OCI-LY7 (cell line): ENCODE measurements at regions of chr12 and their contacts with region 1.

Region 1: GRCh38 chr12:31238764-31239387 is 87.1 kb downstream of the SINHCAF start:
- DNase-seq: peak; percentile 73
- H3K4me3 ChIP-seq: no peak overlapping the region
- H3K27ac ChIP-seq: no peak overlapping the region
- H3K4me1 ChIP-seq: no peaks in the 10 kb centered on the region
- CTCF ChIP-seq: peak; percentile 88

Region 2: GRCh38 chr12:30985814-30986452 is 252.9 kb before region 1 on chr12:
- CTCF ChIA-PET with region 1: no interaction called
- POLR2A ChIA-PET with region 1: no interaction called
- intact Hi-C with region 1: loop called (anchors 10 kb)
- DNase-seq: peak; percentile 66
- H3K4me3 ChIP-seq: no peak overlapping the region
- H3K27ac ChIP-seq: no peak overlapping the region
- H3K4me1 ChIP-seq: peaks cover 10% of the 10 kb centered on the region
- CTCF ChIP-seq: peak; percentile 83

Region 3: GRCh38 chr12:31117203-31118011 is 121.5 kb before region 1 on chr12:
- CTCF ChIA-PET with region 1: no interaction called
- POLR2A ChIA-PET with region 1: no interaction called
- intact Hi-C with region 1: loop called (anchors 2 kb)
- DNase-seq: peak; percentile 72
- H3K4me3 ChIP-seq: peak overlapping the region; percentile 63
- H3K27ac ChIP-seq: no peak overlapping the region
- H3K4me1 ChIP-seq: no peaks in the 10 kb centered on the region
- CTCF ChIP-seq: peak; percentile 80